Endothelial cell of umbilical vein (primary cell): ENCODE measurements at regions of chr3 and their contacts with region 1.

Region 1: GRCh38 chr3:149657926-149658733 is at the start of gene WWTR1:
- DNase-seq: peak; percentile 97
- H3K4me3 ChIP-seq: peak within 1 kb of the TSS; percentile 87 to 99 (median 98)
- H3K27ac ChIP-seq: peak within 1 kb of the TSS; percentile 85
- H3K4me1 ChIP-seq: peaks cover 39% of the 10 kb centered on the region
- H3K27me3 ChIP-seq: no peaks in the 10 kb centered on the region
- CTCF ChIP-seq: no peak
- POLR2A ChIP-seq: peak; percentile 99
- total RNA-seq, gene WWTR1: 210 and 262 TPM in 2 replicates

Region 2: GRCh38 chr3:149134575-149134974 is 523.6 kb before region 1 on chr3:
- CTCF ChIA-PET with region 1: no interaction called
- POLR2A ChIA-PET with region 1: no interaction called
- dilution Hi-C with region 1: no loop called
- intact Hi-C with region 1: no loop called
- DNase-seq: no peak
- H3K4me3 ChIP-seq: no peak overlapping the region
- H3K27ac ChIP-seq: no peak overlapping the region
- H3K4me1 ChIP-seq: no peaks in the 10 kb centered on the region
- H3K27me3 ChIP-seq: no peaks in the 10 kb centered on the region
- CTCF ChIP-seq: no peak
- POLR2A ChIP-seq: no peak

Region 3: DNA sequence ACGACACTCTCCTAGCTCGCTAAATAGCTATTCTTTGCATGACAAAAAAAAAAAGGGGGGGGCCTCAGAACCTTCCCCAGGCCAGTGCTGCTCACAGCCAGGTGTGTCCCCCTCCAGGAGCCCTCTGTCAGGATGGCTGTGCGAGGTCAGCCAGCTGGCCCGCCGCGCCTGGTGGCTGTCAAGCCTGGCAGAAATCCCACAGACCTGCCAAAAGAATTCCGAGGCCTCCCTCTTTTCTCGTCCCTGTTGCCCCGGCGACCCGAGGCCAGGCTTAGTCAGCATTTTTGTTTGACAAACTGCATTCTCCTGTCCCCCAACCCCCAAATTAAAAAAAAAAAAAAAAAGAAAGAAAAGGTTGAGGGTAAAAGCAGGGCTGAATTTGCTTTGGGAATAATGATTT is 121.7 kb before region 1 on chr3:
- CTCF ChIA-PET with region 1: interaction called, 11 read pairs
- POLR2A ChIA-PET with region 1: interaction called, 6 read pairs
- dilution Hi-C with region 1: no loop called
- intact Hi-C with region 1: loop called (anchors 1 kb)
- DNase-seq: no peak
- H3K4me3 ChIP-seq: no peak overlapping the region
- H3K27ac ChIP-seq: peak overlapping the region; percentile 20
- H3K4me1 ChIP-seq: peaks cover 79% of the 10 kb centered on the region
- H3K27me3 ChIP-seq: no peaks in the 10 kb centered on the region
- CTCF ChIP-seq: no peak
- POLR2A ChIP-seq: no peak

Region 4: GRCh38 chr3:149575961-149576564 is 82.1 kb before region 1 on chr3:
- CTCF ChIA-PET with region 1: interaction called, 92 read pairs
- POLR2A ChIA-PET with region 1: interaction called, 16 read pairs
- dilution Hi-C with region 1: no loop called
- intact Hi-C with region 1: loop called (anchors 2 kb)
- DNase-seq: peak; percentile 99
- H3K4me3 ChIP-seq: no peak overlapping the region
- H3K27ac ChIP-seq: peak overlapping the region; percentile 91
- H3K4me1 ChIP-seq: peaks cover 90% of the 10 kb centered on the region
- H3K27me3 ChIP-seq: no peaks in the 10 kb centered on the region
- CTCF ChIP-seq: no peak
- POLR2A ChIP-seq: peak; percentile 79

Region 5: DNA sequence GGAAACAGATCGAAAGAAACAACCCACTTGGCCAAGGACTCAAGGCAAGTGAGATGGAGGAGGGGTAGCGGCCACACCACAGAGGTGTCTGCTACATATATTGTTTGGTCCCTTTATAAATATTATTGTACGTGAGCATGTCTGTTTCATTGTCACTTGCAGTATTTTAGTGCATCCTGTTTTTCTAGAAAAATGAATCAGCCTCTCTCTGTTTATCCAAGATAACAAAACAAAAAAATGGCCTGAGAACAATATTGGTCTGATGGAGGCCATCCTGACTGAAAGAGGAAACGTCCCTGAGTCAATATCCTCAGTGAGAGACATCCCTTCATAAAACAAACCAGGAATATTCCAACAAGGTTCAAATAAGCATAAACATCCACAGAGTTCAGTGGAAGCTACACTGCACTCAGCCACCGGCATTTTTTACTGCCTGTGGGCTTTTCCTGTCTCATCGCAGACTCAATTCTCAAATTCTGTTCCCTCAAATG is 42.4 kb before region 1 on chr3:
- CTCF ChIA-PET with region 1: interaction called, 12 read pairs
- POLR2A ChIA-PET with region 1: interaction called, 10 read pairs
- dilution Hi-C with region 1: no loop called
- intact Hi-C with region 1: loop called (anchors 1 kb)
- DNase-seq: peak; percentile 99
- H3K4me3 ChIP-seq: no peak overlapping the region
- H3K27ac ChIP-seq: peak overlapping the region; percentile 99
- H3K4me1 ChIP-seq: peaks cover 96% of the 10 kb centered on the region
- H3K27me3 ChIP-seq: no peaks in the 10 kb centered on the region
- CTCF ChIP-seq: no peak
- POLR2A ChIP-seq: peak; percentile 86

Region 6: DNA sequence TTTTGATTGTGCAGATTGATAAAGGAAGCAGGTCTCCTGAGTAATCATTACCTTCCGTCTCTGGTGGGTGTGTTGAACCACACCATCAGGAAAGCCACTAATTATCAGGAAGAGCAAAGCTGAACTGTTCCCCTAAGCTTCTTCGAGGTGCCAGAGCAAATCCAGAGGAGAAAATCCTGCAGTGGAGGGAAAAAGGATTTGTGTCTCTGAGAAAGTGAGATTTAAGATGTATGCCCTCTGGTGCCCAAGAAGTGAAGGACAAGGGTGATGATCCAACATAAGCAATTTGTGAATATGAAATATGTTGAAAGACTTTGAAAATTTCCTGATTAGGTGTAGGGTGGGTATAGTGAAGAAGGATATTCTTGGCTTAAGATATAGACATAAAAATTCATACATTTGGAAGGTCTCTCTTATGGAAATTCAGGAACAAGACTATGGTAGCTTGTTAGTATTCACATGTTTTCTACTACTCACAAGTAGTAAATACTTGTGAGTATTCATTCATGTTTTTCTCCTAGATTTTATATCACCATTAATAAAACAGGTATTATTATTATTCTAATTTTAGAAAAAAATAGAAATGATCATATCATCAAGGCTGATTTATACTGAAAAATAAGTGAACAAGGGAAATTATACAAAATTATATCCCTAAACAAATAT is 59.4 kb after region 1 on chr3:
- CTCF ChIA-PET with region 1: interaction called, 66 read pairs
- POLR2A ChIA-PET with region 1: interaction called, 5 read pairs
- dilution Hi-C with region 1: no loop called
- intact Hi-C with region 1: loop called (anchors 1 kb)
- DNase-seq: peak; percentile 87
- H3K4me3 ChIP-seq: no peak overlapping the region
- H3K27ac ChIP-seq: no peak overlapping the region
- H3K4me1 ChIP-seq: peaks cover 15% of the 10 kb centered on the region
- H3K27me3 ChIP-seq: no peaks in the 10 kb centered on the region
- CTCF ChIP-seq: peak; percentile 54 to 58
- POLR2A ChIP-seq: no peak